A673 (cell line): ENCODE measurements at regions of chr1 and their contacts with region 1.

Region 1: DNA sequence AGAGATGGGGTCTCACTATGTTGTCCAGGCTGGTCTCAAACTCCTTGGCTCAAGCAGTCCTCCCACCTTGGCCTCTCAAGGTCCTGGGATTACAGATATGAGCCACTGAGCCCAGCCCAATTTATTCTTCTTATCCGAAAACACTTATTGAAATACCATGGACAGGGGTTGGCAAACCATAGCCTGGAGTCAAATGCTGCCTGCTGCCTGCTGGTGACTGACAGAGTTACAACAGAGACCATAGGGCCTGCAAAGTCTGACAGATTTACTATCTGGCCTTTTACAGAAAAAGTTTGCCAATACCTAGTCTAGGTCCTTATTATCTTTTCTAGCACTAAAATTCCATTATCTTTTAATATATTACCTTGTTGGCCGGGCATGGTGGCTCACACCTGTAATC is 87.1 kb upstream of the ZNF281 start:
- DNase-seq: no peak
- H3K4me3 ChIP-seq: no peak overlapping the region
- H3K27ac ChIP-seq: no peak overlapping the region
- H3K4me1 ChIP-seq: no peaks in the 10 kb centered on the region
- H3K27me3 ChIP-seq: no peaks in the 10 kb centered on the region
- CTCF ChIP-seq: no peak

Region 2: GRCh38 chr1:199821026-199821779 is 675.7 kb before region 1 on chr1:
- CTCF ChIA-PET with region 1: no interaction called
- POLR2A ChIA-PET with region 1: interaction called, 10 read pairs
- intact Hi-C with region 1: no loop called
- DNase-seq: no peak
- H3K4me3 ChIP-seq: no peak overlapping the region
- H3K27ac ChIP-seq: no peak overlapping the region
- H3K4me1 ChIP-seq: no peaks in the 10 kb centered on the region
- H3K27me3 ChIP-seq: peaks cover 45% of the 10 kb centered on the region
- CTCF ChIP-seq: no peak

Region 3: DNA sequence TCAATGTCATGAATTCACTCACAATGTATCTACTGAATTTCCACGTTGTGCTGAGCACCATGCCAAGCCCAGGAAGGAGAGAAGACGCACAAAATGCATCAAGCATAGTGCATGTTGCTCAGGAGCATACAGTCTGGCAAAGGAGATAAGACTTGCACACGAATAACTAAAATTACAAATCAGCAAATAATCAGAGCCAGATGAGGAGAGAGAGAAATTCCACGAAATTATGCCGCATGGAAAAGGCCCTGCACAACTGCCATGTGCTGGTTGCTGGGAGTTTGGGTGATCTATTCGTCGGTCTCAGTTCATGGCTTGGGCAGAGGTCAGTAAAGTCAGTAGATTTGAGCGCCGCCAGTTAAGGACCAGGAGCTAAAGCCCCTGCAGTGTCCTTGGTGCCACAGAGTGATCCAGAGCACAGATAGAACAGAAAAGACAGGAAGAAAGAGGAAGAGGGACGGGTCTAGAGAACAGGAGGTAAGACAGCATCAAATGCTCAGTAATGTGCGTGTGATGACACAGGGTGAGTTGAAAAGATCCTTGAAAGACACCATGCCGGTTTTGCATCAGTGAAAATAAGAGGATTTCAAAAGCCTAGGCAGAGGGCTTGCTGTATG is 32.0 kb before region 1 on chr1:
- CTCF ChIA-PET with region 1: no interaction called
- POLR2A ChIA-PET with region 1: no interaction called
- intact Hi-C with region 1: no loop called
- DNase-seq: no peak
- H3K4me3 ChIP-seq: no peak overlapping the region
- H3K27ac ChIP-seq: no peak overlapping the region
- H3K4me1 ChIP-seq: no peaks in the 10 kb centered on the region
- H3K27me3 ChIP-seq: no peaks in the 10 kb centered on the region
- CTCF ChIP-seq: no peak

Region 4: DNA sequence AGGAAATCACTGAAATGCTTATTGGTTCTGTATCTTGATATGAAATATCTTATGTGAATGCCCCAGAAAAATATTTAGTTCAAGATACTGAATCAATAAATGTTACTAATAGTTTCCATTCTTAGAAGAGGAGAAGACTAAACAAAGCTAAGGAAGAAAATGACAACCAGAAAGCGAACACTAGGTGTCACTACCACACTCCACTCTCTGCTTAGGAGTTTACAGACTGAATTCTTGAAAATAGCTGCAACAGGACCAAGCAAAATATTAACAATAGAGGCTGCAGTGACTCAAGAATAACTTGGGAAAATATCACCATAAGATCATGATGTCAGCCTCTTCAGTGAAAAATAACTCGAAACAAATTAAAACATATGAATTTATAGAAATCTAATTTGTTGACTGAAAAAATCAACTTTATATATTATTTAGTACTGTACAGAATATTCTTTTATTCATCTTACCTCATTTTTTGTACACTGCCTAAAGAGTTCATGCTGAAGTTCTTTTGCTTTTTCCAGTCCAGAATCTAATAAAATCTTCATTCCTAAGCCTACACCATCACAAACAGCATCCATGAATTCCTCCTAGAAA is 62.0 kb after region 1 on chr1:
- CTCF ChIA-PET with region 1: no interaction called
- POLR2A ChIA-PET with region 1: no interaction called
- intact Hi-C with region 1: no loop called
- DNase-seq: peak; percentile 53
- H3K4me3 ChIP-seq: no peak overlapping the region
- H3K27ac ChIP-seq: no peak overlapping the region
- H3K4me1 ChIP-seq: no peaks in the 10 kb centered on the region
- H3K27me3 ChIP-seq: no peaks in the 10 kb centered on the region
- CTCF ChIP-seq: peak; percentile 73

Region 5: DNA sequence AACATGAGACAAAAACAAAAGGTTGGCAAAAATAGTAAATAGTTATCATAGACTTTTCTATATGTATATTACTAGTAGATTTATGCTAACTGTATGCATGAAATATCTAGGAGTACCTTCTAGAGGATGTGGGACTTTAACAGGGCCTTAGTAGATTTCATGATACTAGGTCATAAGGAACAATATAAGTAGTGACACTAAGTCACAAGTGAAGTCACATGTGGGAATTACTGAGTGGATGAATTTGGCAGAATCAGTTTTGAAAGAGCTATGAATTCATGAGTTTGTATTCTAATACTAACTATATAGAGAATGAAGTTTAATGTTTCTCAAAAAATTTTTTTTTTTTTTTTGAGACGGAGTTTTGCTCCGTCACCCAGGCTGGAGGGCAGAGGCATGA is 322.8 kb after region 1 on chr1:
- CTCF ChIA-PET with region 1: no interaction called
- POLR2A ChIA-PET with region 1: no interaction called
- intact Hi-C with region 1: no loop called
- DNase-seq: no peak
- H3K4me3 ChIP-seq: no peak overlapping the region
- H3K27ac ChIP-seq: no peak overlapping the region
- H3K4me1 ChIP-seq: no peaks in the 10 kb centered on the region
- H3K27me3 ChIP-seq: no peaks in the 10 kb centered on the region
- CTCF ChIP-seq: no peak